IMR-90 (cell line): ENCODE measurements at regions of chr18 and their contacts with region 1.

Region 1: DNA sequence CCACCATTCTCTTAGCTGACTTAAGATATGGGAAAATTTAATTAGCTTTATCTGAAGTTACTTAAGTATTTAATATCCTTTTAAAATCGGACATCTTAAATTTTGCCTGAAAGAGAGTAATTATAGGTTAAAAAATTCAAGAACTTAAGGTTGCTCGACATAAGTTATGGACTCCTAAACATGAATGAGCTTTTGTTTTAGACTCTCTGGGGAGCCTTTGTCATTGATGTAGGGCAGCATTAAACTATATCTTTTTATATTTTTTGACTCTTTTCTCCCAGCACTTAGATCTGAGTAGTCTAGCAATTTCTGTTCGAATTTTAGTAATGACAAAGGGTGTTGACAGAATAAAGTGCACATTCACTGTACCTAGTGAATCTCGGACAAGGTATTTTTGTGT is 4.7 kb downstream of the PHLPP1 start:
- DNase-seq: no peak
- ATAC-seq: no peak
- H3K4me3 ChIP-seq: no peak overlapping the region
- H3K27ac ChIP-seq: no peak overlapping the region
- H3K4me1 ChIP-seq: peaks cover 2% of the 10 kb centered on the region
- H3K27me3 ChIP-seq: no peaks in the 10 kb centered on the region
- CTCF ChIP-seq: no peak
- POLR2A ChIP-seq: no peak
- RAD21 ChIP-seq: no peak

Region 2: DNA sequence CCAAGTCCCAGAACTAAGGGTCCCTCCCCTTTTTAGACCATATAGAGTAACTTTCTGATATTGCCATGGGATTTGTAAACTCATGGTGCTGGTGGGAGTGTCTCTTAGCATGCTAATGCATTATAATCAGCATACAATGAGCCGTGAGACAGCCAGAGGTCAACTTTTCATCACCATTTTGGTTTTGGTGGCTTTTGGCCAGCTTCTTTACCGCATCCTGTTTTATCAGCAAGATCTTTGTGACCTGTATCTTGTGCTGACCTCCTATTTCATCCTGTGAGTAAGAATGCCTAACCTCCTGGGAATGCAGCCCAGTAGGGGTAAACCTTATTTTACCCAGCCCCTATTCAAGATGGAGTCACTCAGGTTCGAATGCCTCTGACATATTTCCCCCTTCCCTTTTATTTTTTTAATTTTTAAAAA is 143.5 kb after region 1 on chr18:
- CTCF ChIA-PET with region 1: no interaction called
- POLR2A ChIA-PET with region 1: interaction called, 19 read pairs
- dilution Hi-C with region 1: no loop called
- in situ Hi-C with region 1: no loop called
- intact Hi-C with region 1: no loop called
- DNase-seq: peak; percentile 65
- ATAC-seq: no peak
- H3K4me3 ChIP-seq: no peak overlapping the region
- H3K27ac ChIP-seq: no peak overlapping the region
- H3K4me1 ChIP-seq: no peaks in the 10 kb centered on the region
- H3K27me3 ChIP-seq: no peaks in the 10 kb centered on the region
- CTCF ChIP-seq: no peak
- POLR2A ChIP-seq: no peak
- RAD21 ChIP-seq: no peak